GM10248 (cell line): ENCODE measurements at regions of chr17 and their contacts with region 1.

Region 1: GRCh38 chr17:32551186-32551955 is 64.6 kb downstream of the CDK5R1 start:
- DNase-seq: peak; percentile 71
- CTCF ChIP-seq: no peak

Region 2: GRCh38 chr17:32564325-32564724 is 13.0 kb after region 1 on chr17:
- CTCF ChIA-PET with region 1: interaction called, 11 read pairs
- POLR2A ChIA-PET with region 1: interaction called, 3 read pairs
- DNase-seq: no peak
- CTCF ChIP-seq: no peak